Common myeloid progenitor, CD34-positive (primary cell): ENCODE measurements at regions of chr2 and their contacts with region 1.

Region 1: GRCh38 chr2:199462956-199463692 is 5.4 kb upstream of the SATB2 start:
- DNase-seq: peak; percentile 55 to 70 (median 70)
- H3K4me3 ChIP-seq: peak overlapping the region in 6 of 7 experiments; percentile 11 to 70 (median 56)
- H3K27ac ChIP-seq: no peak overlapping the region
- H3K4me1 ChIP-seq: peaks cover 0 to 43% (median 34%) of the 10 kb centered on the region in 4 experiments
- H3K27me3 ChIP-seq: peaks cover 31 to 99% (median 59%) of the 10 kb centered on the region in 5 experiments

Region 2: DNA sequence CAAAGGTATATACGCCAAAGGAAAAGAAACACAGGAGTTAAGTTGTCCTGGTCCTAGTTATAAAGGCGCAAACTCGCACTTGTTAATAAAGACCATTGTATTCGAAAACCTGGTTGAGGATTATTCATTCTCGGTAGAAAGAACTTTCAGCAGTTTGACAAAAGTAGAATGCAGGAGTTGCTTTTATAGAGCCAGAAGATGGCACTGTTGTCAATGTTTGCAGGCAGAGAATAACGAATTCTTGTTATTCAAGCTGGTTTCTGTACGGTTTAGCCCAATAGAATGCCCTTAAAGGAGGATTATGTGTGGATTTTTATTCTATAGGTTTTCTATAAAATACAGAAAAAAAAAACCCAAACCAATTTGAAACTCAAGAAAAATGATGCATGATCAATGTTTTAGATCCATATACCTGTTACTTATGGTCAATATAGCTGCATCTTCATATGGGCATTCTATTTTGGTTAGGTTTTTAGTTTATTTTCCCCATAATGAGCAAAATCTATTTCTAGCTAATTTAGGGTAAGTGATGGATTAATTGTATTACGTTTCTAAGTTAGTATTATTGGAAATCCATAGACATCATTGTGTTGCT is 1148.5 kb before region 1 on chr2:
- CTCF ChIA-PET with region 1: interaction called, 44 read pairs
- POLR2A ChIA-PET with region 1: no interaction called
- DNase-seq: peak; percentile 68 to 85 (median 79)
- H3K4me3 ChIP-seq: no peak overlapping the region
- H3K27ac ChIP-seq: no peak overlapping the region
- H3K4me1 ChIP-seq: no peaks in the 10 kb centered on the region
- H3K27me3 ChIP-seq: peaks cover 9 to 82% (median 30%) of the 10 kb centered on the region in 5 experiments

Region 3: DNA sequence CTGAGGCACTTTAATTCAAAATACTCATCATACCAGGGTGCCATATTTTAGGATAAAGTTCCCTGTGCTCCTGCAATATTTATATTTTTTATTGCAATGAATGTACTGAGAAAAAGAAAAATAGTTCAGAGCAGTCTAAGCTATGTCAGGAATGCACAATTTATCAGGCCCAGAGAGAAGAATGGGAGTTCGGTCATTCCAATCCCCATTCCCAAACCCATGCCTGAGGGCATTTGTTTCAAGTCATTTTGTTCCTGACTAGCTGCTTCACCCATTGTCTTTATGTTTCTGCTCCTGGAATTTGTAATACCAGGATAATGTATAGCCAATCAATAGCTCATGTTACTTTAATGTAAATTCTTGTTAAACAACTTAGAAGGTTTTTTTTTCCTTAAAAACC is 412.3 kb after region 1 on chr2:
- CTCF ChIA-PET with region 1: no interaction called
- POLR2A ChIA-PET with region 1: no interaction called
- DNase-seq: no peak
- H3K4me3 ChIP-seq: no peak overlapping the region
- H3K27ac ChIP-seq: no peak overlapping the region
- H3K4me1 ChIP-seq: no peaks in the 10 kb centered on the region
- H3K27me3 ChIP-seq: no peaks in the 10 kb centered on the region